Caco-2 (cell line): ENCODE measurements at regions of chrX and their contacts with region 1.

Region 1: DNA sequence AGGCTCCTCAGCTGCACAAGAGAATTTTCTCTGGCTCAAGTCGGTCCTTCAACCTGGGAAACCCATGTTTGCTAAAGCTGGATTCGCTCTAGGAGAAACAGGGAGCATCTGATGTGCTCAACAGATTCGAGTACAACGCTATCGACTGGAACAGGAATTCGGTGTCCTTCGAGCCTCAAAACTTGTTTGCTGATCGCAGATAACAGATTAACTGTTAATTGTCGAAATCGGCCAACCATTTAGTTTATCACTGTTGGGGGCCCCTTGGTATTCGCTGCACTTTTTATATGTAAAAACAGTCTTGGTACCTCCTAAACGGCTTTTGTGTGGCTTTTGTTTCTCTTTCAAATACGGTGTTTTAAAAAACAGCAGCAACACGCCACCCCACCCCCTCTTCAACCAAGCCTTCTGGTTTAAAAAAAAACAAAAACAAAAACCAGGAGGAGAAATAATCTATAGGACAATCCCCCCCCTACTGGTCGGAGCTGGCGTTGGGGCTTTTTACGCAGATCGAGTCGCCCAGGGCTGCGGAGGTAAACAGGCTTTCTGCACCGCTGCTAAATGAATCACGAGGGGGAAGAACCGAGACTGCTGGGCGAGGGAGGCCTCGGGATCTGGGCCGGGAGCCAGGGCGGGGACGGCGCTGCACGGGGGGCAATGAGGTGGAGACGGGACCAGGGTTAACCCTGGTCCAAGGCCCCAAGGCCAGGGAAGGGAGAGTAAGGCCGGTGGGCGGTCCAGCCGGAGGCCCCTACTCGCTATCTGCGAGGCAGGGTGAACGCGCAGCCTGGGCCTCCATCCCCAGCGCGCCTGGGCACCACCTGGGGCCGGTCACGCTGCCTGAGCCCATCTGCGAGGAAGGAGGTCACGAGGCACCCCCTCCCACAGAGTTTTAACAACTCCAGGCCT is 71.7 kb upstream of the BCOR start:
- DNase-seq: peak; percentile 68
- H3K4me3 ChIP-seq: no peak overlapping the region
- H3K4me3 Mint-ChIP-seq: peak overlapping the region; percentile 37
- H3K27ac Mint-ChIP-seq: no peak overlapping the region
- H3K4me1 ChIP-seq: peaks cover 15% of the 10 kb centered on the region
- H3K4me1 Mint-ChIP-seq: no peaks in the 10 kb centered on the region
- H3K27me3 ChIP-seq: no peaks in the 10 kb centered on the region
- H3K27me3 Mint-ChIP-seq: no peaks in the 10 kb centered on the region
- CTCF ChIP-seq: peak; percentile 35 to 51

Region 2: DNA sequence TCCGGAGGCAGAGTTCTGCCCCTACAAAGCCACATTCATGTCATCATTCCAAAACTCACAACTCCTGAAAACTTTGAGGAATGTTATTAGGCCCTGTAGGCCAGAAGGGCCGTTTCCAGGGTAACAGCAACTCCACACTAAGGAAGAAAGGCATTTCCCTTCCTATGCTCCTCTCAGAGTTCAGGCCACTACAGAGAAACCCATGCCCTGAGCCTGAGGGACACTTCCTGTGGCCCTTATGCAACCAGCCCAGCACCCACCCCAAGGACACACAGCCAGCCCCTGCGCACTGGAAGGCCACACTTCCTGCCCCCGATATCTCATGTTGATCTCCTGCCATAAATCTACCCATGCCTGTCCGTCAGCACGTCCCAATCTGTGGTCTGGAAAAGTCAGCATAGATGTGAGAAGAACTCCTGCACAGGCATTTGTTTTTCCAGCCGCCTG is 361.0 kb before region 1 on chrX:
- CTCF ChIA-PET with region 1: no interaction called
- POLR2A ChIA-PET with region 1: no interaction called
- intact Hi-C with region 1: loop called (anchors 5 kb)
- DNase-seq: no peak
- H3K4me3 ChIP-seq: no peak overlapping the region
- H3K4me3 Mint-ChIP-seq: no peak overlapping the region
- H3K27ac Mint-ChIP-seq: no peak overlapping the region
- H3K4me1 ChIP-seq: 0 out of 2 replicates have a peak, but pooled peaks cover 5% of the 10 kb centered on the region
- H3K4me1 Mint-ChIP-seq: no peaks in the 10 kb centered on the region
- H3K27me3 ChIP-seq: no peaks in the 10 kb centered on the region
- H3K27me3 Mint-ChIP-seq: no peaks in the 10 kb centered on the region
- CTCF ChIP-seq: no peak

Region 3: GRCh38 chrX:39936886-39937770 is 232.3 kb before region 1 on chrX:
- CTCF ChIA-PET with region 1: no interaction called
- POLR2A ChIA-PET with region 1: no interaction called
- intact Hi-C with region 1: no loop called
- DNase-seq: no peak
- H3K4me3 ChIP-seq: no peak overlapping the region
- H3K4me3 Mint-ChIP-seq: no peak overlapping the region
- H3K27ac Mint-ChIP-seq: no peak overlapping the region
- H3K4me1 ChIP-seq: no peaks in the 10 kb centered on the region
- H3K4me1 Mint-ChIP-seq: peaks cover 6% of the 10 kb centered on the region
- H3K27me3 ChIP-seq: no peaks in the 10 kb centered on the region
- H3K27me3 Mint-ChIP-seq: no peaks in the 10 kb centered on the region
- CTCF ChIP-seq: no peak

Region 4: DNA sequence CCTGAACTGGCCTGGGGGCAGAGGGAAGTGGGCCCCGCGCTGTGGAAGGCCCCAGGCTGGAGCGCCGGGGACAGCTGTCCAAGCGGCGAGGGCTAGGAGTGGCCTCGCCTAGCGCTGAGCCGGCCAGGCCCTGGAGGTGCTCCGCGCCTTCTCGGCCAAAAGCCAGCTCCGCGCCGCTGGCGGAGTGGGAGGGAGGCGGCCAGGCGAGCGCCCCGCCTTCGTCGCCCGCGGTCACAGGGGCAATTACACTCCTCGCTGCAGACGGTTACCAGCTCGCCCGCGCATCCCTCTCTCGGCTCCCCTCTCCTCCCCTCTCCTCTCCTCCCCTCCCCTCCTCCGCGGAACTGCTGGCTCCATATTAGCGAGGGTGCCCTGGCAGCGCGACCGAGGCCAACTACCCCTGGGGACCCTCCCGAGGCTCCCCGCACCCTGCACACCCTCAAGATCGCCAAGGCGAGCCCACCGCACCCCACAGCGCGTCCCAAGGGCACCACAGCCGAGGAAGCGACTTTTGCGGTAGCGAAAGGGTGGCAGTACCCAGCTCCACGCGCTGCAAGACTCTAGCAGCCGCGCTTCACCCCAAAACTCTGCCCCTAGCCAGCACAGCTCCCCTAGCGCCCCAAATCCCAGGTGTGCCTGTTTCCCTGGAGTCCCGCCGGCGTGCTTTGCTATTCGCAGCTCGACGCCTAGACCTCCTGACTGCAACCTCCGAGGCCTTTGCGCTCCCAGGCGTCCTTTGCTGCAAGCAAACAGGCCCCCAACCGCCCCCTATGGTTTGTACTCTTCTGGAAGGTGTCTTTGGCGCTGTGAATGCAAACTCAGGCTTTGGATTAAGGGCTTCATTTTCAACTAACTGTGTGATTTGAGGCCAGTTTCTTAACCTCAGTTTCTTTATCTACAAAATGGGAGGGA is 163.1 kb before region 1 on chrX:
- CTCF ChIA-PET with region 1: interaction called, 4 read pairs
- POLR2A ChIA-PET with region 1: no interaction called
- intact Hi-C with region 1: loop called (anchors 5 kb)
- DNase-seq: peak; percentile 72 to 74
- H3K4me3 ChIP-seq: peak overlapping the region; percentile 69
- H3K4me3 Mint-ChIP-seq: peak overlapping the region; percentile 82
- H3K27ac Mint-ChIP-seq: no peak overlapping the region
- H3K4me1 ChIP-seq: peaks cover 25% of the 10 kb centered on the region
- H3K4me1 Mint-ChIP-seq: peaks cover 14% of the 10 kb centered on the region
- H3K27me3 ChIP-seq: no peaks in the 10 kb centered on the region
- H3K27me3 Mint-ChIP-seq: no peaks in the 10 kb centered on the region
- CTCF ChIP-seq: peak in 1 of 2 experiments; percentile 23

Region 5: GRCh38 chrX:40237731-40238178 is 68.3 kb after region 1 on chrX:
- CTCF ChIA-PET with region 1: no interaction called
- POLR2A ChIA-PET with region 1: no interaction called
- intact Hi-C with region 1: no loop called
- DNase-seq: no peak
- H3K4me3 ChIP-seq: no peak overlapping the region
- H3K4me3 Mint-ChIP-seq: no peak overlapping the region
- H3K27ac Mint-ChIP-seq: no peak overlapping the region
- H3K4me1 ChIP-seq: no peaks in the 10 kb centered on the region
- H3K4me1 Mint-ChIP-seq: no peaks in the 10 kb centered on the region
- H3K27me3 ChIP-seq: no peaks in the 10 kb centered on the region
- H3K27me3 Mint-ChIP-seq: no peaks in the 10 kb centered on the region
- CTCF ChIP-seq: no peak